ENCODE measurements at regions of chr2 and their contacts with region 1.

Region 1: DNA sequence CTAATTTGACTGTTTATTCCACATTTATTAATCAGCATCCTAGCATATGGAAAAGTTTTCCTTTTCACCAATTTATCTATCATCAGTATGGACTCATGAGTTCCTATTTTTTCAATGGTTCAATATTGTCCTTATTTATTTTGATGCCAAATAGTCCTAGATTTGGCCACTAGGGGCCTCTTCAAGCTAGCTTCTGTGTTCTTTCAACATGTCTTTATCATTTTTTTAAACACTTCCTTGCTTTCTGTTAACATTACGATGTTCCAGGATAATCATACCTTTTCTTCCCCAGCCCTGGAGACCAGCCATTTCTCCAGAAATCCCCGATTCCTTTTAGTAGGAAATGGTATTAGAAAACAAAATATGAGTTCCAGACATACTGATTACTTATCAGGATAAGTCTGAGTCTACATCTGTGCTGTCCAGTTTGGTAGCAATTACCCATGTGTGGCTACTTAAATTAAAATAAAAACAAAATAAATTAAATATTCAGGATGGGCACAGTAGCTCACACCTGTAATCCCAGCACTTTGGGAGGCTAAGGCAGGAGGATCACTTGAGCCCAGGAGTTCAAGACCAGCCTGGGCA is 70.6 kb downstream of the RPE start:
- DNase-seq: peak; percentile 46
- ATAC-seq: peak; percentile 88
- H3K4me3 ChIP-seq: no peak overlapping the region
- H3K27ac ChIP-seq: no peak overlapping the region
- H3K4me1 ChIP-seq: no peaks in the 10 kb centered on the region
- H3K27me3 ChIP-seq: no peaks in the 10 kb centered on the region
- CTCF ChIP-seq: peak; percentile 43
- EP300 ChIP-seq: no peak
- POLR2A ChIP-seq: no peak
- RAD21 ChIP-seq: 0 out of 2 replicates have a peak, but pooled peaks have one; percentile 28

Region 2: DNA sequence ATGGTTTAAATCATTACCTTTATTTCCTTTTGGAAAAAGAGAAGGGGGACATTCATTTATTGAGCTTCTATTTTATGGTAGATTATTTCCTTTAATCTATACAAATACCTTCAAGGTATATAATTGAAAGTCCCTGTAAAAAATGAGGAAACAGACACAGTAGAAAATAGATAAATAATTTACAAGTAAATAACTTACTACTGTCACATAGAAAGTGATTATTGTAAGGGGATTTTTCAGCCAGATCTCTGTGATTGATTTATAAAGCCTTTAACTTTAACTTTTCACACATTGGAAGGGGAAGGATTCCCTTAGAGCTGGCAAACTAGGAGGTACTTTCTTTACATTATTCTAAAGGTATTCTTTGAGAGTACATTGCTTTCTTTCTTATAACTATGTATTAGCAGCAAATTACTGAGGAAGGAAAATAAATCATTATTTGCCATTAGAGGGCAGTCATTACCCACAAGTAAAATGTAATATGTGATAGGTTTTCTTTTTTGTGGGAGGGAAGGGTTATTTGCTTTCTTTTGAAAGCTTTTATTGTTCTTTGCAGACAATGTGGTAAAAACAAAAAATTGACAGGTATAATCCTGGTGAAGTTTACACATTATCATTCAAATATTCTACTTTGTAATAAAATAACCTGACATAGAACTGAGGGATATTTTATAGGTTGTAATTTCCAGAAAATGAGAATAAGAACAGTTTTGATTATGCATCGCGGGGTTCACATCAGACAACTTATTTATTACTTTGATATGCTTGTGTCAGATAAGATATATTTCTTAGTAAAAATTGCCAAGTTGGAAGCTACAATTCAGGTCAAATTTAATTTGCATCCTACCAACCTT is 95.4 kb before region 1 on chr2:
- CTCF ChIA-PET with region 1: no interaction called
- POLR2A ChIA-PET with region 1: no interaction called
- in situ Hi-C with region 1: no loop called
- intact Hi-C with region 1: loop called (anchors 1 kb)
- DNase-seq: peak; percentile 39
- ATAC-seq: no peak; the same call in 2 of the 3 replicates
- H3K4me3 ChIP-seq: no peak overlapping the region
- H3K27ac ChIP-seq: no peak overlapping the region
- H3K4me1 ChIP-seq: no peaks in the 10 kb centered on the region
- H3K27me3 ChIP-seq: peaks cover 0 to 5% of the 10 kb centered on the region in 2 experiments; a peak in 1 of 5 replicates
- CTCF ChIP-seq: peak; percentile 68
- EP300 ChIP-seq: no peak
- POLR2A ChIP-seq: no peak
- RAD21 ChIP-seq: peak; percentile 61

Region 3: DNA sequence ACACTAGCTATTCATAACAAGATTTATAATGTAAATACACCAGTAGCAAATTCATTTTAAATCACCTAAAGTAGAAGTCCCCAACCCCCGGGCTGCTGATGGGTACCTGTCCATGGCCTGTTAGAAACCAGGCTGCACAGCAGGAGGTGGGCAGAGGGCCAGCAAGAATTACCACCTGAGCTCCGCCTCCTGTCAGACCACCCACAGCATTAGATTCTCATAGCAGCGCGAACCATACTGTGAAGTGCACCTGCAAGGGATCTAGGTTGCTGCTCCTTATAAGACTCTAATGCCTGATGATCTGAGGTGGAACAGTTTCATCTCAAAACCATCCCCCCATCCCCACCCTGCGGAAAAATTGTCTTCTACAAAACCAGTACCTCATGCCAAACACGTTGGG is 26.9 kb after region 1 on chr2:
- CTCF ChIA-PET with region 1: no interaction called
- POLR2A ChIA-PET with region 1: no interaction called
- in situ Hi-C with region 1: no loop called
- intact Hi-C with region 1: no loop called
- DNase-seq: no peak
- ATAC-seq: no peak
- H3K4me3 ChIP-seq: no peak overlapping the region
- H3K27ac ChIP-seq: no peak overlapping the region
- H3K4me1 ChIP-seq: no peaks in the 10 kb centered on the region
- H3K27me3 ChIP-seq: no peaks in the 10 kb centered on the region
- CTCF ChIP-seq: no peak
- EP300 ChIP-seq: no peak
- POLR2A ChIP-seq: no peak
- RAD21 ChIP-seq: no peak